Ovary (tissue), 10 donors: ENCODE measurements at regions of chr9 and their contacts with region 1.

Region 1: DNA sequence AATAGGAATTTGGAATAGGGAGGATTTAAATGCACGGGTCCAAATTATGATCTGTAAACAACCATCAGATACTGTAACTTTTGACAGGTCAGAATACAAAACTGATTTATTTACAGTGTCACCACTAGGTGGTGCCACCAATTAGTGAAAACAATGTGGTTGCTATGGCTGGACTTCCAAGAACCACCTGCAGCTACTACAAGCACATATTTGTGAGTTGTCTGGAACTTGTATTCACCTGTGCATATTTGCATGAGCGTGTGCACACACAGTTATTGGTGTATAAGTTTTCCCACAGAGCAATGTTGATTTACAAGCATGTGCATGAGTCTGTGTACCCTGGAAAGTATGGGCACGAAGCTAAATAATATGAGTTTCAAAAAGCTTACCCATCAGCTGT is 3.0 kb upstream of the HRCT1 start:
- DNase-seq: no peak
- H3K4me3 ChIP-seq: no peak overlapping the region
- H3K27ac ChIP-seq: no peak overlapping the region
- H3K4me1 ChIP-seq: peaks cover 25% of the 10 kb centered on the region
- H3K27me3 ChIP-seq: no peaks in the 10 kb centered on the region
- CTCF ChIP-seq: peak; percentile 15 to 79 (median 79)
- EP300 ChIP-seq: no peak
- POLR2A ChIP-seq: no peak

Region 2: GRCh38 chr9:35882263-35882848 is 20.7 kb before region 1 on chr9:
- intact Hi-C with region 1: no loop called
- DNase-seq: peak; percentile 79 to 89 (median 87)
- H3K4me3 ChIP-seq: no peak overlapping the region
- H3K27ac ChIP-seq: no peak overlapping the region
- H3K4me1 ChIP-seq: no peaks in the 10 kb centered on the region
- H3K27me3 ChIP-seq: no peaks in the 10 kb centered on the region
- CTCF ChIP-seq: peak; percentile 82 to 91 (median 85)
- EP300 ChIP-seq: no peak
- POLR2A ChIP-seq: no peak

Region 3: DNA sequence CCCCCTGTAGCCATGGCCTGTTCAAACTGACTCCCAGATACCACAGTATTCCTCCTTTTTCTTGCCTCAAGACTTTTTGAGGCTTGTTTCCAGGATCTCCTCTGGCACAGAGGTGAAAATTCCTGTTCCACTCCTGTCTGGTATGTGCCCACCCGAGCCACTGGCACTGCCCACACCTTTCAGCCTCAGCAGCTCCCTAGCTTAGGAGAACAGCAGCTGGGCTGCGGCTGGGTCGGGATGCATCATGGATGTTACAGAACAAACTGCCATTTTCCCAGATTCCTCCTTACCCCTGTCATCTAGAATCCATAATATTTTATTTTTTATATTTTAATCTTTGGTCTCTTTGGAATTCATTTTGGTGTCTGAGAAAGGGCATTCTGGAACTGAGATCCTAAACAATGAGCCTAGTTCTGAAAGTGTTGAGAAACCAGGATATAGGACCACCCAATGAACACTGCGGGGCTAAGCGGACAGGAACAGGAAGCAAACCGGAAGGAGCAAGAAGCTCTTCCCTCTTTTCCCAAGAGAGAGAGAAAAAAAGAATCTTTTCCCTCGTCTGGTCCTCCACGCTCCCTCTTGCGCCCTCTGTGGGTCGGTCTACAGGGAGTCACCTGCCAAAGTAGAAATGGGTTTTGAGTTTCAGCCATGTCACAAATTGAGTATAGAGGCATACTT is 42.4 kb after region 1 on chr9:
- intact Hi-C with region 1: loop called (anchors 2 to 5 kb)
- DNase-seq: peak; percentile 85 to 89 (median 88)
- H3K4me3 ChIP-seq: no peak overlapping the region
- H3K27ac ChIP-seq: no peak overlapping the region
- H3K4me1 ChIP-seq: peaks cover 3% of the 10 kb centered on the region
- H3K27me3 ChIP-seq: no peaks in the 10 kb centered on the region
- CTCF ChIP-seq: peak; percentile 61 to 75 (median 72)
- EP300 ChIP-seq: no peak
- POLR2A ChIP-seq: no peak